Caco-2 (cell line): ENCODE measurements at regions of chr3 and their contacts with region 1.

Region 1: DNA sequence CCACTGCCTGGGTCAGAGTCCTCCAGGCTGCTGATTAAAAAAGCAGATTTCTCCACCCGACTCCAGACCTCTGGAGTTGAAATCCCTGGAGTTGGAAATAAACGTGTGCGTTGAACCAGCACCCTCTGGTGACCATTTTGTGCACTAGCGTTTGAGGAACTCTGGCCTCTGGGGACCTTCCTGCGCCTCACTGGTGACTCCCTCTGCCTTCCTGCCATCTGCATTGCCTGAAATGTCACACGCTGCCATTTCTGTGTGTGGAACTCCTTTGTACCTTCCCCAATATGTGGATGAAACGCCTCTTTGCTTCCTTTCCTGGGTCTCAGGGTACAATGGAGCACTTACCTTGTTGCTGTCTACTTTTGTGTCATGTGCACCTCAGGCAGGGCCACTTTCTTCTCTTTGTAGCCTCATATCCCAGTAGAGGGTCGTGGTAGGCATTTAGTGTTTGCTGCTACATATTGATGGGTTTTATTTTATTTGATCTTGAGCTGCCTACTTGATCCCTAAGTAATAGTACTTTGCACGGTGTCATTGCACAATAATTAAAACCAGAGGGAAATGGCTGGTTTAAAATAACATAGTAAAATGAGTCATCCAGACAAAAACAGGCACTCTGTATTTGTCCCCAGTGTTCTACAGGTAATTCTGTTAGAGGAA is 56.8 kb downstream of the GPR171 start:
- DNase-seq: peak; percentile 77 to 80
- H3K4me3 ChIP-seq: no peak overlapping the region
- H3K4me3 Mint-ChIP-seq: no peak overlapping the region
- H3K27ac Mint-ChIP-seq: no peak overlapping the region
- H3K4me1 ChIP-seq: peaks cover 32% of the 10 kb centered on the region
- H3K4me1 Mint-ChIP-seq: peaks cover 30% of the 10 kb centered on the region
- H3K27me3 ChIP-seq: no peaks in the 10 kb centered on the region
- H3K27me3 Mint-ChIP-seq: no peaks in the 10 kb centered on the region
- CTCF ChIP-seq: peak; percentile 81 to 88

Region 2: DNA sequence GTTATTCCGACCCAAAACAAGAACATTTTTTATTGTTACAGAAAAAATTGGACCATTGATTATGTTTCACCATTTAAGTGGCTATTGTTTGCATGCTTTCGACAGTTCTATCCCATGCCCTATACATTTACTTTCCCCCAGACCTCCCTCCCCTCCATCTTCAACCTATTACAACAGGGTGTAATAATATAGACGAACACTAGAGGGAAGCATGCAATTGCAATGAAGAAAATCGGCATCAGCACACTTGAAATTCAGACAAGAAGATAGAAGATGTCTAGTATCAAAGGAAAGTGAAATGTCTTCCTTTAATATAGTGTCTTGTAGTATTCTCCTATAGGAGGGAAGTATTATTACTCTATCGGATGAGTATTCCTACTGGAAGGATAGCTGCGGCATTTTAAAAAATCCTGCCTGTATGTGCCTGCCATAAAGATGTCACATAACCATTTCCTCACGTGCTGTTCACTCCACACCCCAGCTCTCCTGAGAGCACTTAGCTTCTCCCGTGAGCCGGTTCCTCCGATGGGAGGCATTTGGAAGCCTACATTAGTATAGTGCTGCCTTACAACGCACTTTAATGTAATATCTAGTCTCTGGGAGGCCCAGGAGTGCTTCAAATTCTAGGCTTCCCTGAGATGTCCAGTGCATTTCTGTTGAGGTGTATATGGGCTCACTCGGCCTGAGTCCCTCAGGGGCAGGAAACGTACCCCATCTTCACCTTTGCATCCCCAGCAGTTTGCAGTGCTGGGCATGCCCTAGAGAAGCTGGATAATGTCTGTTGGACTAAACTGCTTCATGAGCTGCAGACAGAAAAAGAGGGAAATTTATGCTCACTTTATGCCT is 424.7 kb before region 1 on chr3:
- CTCF ChIA-PET with region 1: no interaction called
- POLR2A ChIA-PET with region 1: no interaction called
- intact Hi-C with region 1: loop called (anchors 2 kb)
- DNase-seq: peak in 1 of 2 experiments; percentile 56
- H3K4me3 ChIP-seq: no peak overlapping the region
- H3K4me3 Mint-ChIP-seq: no peak overlapping the region
- H3K27ac Mint-ChIP-seq: no peak overlapping the region
- H3K4me1 ChIP-seq: peaks cover 9% of the 10 kb centered on the region
- H3K4me1 Mint-ChIP-seq: peaks cover 9% of the 10 kb centered on the region
- H3K27me3 ChIP-seq: no peaks in the 10 kb centered on the region
- H3K27me3 Mint-ChIP-seq: peaks cover 3% of the 10 kb centered on the region
- CTCF ChIP-seq: peak; percentile 60 to 72

Region 3: GRCh38 chr3:150925751-150926201 is 220.4 kb before region 1 on chr3:
- CTCF ChIA-PET with region 1: interaction called, 4 read pairs
- POLR2A ChIA-PET with region 1: no interaction called
- intact Hi-C with region 1: loop called (anchors 1 kb)
- DNase-seq: peak; percentile 65 to 79
- H3K4me3 ChIP-seq: no peak overlapping the region
- H3K4me3 Mint-ChIP-seq: peak overlapping the region; percentile 24
- H3K27ac Mint-ChIP-seq: no peak overlapping the region
- H3K4me1 ChIP-seq: no peaks in the 10 kb centered on the region
- H3K4me1 Mint-ChIP-seq: peaks cover 6% of the 10 kb centered on the region
- H3K27me3 ChIP-seq: no peaks in the 10 kb centered on the region
- H3K27me3 Mint-ChIP-seq: peaks cover 14% of the 10 kb centered on the region
- CTCF ChIP-seq: peak; percentile 80 to 86

Region 4: GRCh38 chr3:151067158-151067557 is 79.0 kb before region 1 on chr3:
- CTCF ChIA-PET with region 1: interaction called, 7 read pairs
- POLR2A ChIA-PET with region 1: no interaction called
- intact Hi-C with region 1: loop called (anchors 1 kb)
- DNase-seq: peak; percentile 42 to 63
- H3K4me3 ChIP-seq: no peak overlapping the region
- H3K4me3 Mint-ChIP-seq: no peak overlapping the region
- H3K27ac Mint-ChIP-seq: no peak overlapping the region
- H3K4me1 ChIP-seq: no peaks in the 10 kb centered on the region
- H3K4me1 Mint-ChIP-seq: no peaks in the 10 kb centered on the region
- H3K27me3 ChIP-seq: no peaks in the 10 kb centered on the region
- H3K27me3 Mint-ChIP-seq: peaks cover 3% of the 10 kb centered on the region
- CTCF ChIP-seq: peak; percentile 55 to 57

Region 5: DNA sequence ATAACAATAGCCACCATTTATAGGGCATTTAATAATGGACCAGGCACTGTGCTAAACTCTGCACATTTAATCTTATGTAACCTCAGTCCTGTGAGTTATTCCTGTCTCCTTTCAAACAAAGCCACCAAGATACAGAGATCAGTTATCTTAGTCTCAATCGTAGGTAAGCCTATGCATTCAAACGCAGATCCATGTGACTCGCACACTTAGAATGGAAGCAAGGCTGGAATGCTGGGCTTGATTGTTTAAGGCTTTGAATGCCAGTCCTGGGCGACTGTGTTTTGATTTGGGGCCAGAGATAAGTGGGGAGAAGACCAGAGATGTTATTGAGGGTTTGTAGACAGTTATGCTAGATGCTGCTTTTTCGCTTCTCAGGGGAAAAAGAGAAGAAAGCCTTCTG is 38.5 kb before region 1 on chr3:
- CTCF ChIA-PET with region 1: interaction called, 3 read pairs
- POLR2A ChIA-PET with region 1: no interaction called
- intact Hi-C with region 1: loop called (anchors 2 kb)
- DNase-seq: peak; percentile 64 to 65
- H3K4me3 ChIP-seq: no peak overlapping the region
- H3K4me3 Mint-ChIP-seq: peak overlapping the region; percentile 61
- H3K27ac Mint-ChIP-seq: peak overlapping the region; percentile 74
- H3K4me1 ChIP-seq: peaks cover 42% of the 10 kb centered on the region
- H3K4me1 Mint-ChIP-seq: peaks cover 12% of the 10 kb centered on the region
- H3K27me3 ChIP-seq: no peaks in the 10 kb centered on the region
- H3K27me3 Mint-ChIP-seq: no peaks in the 10 kb centered on the region
- CTCF ChIP-seq: no peak

Region 6: GRCh38 chr3:151210676-151211381 is 64.6 kb after region 1 on chr3:
- CTCF ChIA-PET with region 1: no interaction called
- POLR2A ChIA-PET with region 1: no interaction called
- intact Hi-C with region 1: no loop called
- DNase-seq: no peak
- H3K4me3 ChIP-seq: no peak overlapping the region
- H3K4me3 Mint-ChIP-seq: no peak overlapping the region
- H3K27ac Mint-ChIP-seq: peak overlapping the region; percentile 72
- H3K4me1 ChIP-seq: peaks cover 18% of the 10 kb centered on the region
- H3K4me1 Mint-ChIP-seq: peaks cover 5% of the 10 kb centered on the region
- H3K27me3 ChIP-seq: no peaks in the 10 kb centered on the region
- H3K27me3 Mint-ChIP-seq: no peaks in the 10 kb centered on the region
- CTCF ChIP-seq: peak in 1 of 2 experiments; percentile 12